Panc1 (cell line): ENCODE measurements at regions of chr4 and their contacts with region 1.

Region 1: DNA sequence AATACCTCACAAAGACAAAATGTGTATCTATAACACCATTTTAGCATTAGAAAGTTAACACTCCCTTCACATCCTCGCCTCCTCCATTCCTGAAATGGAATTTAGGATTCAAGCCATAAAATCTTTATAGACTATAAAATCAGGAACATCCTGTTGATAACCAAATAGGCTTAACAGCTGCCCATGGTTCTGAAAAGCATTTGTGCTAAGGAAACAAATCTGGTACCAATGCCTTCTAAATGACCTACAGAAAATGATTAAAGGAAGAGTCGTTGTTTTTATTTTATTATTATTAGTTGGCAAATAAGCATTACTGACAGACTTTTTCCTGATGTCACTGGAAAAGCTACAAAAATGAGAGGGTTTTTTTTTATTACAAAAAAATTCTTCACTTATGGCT is 79.8 kb downstream of the PAPSS1 start:
- DNase-seq: no peak
- ATAC-seq: no peak
- H3K4me3 ChIP-seq: no peak overlapping the region
- H3K27ac ChIP-seq: no peak overlapping the region
- H3K4me1 ChIP-seq: no peaks in the 10 kb centered on the region
- H3K27me3 ChIP-seq: no peaks in the 10 kb centered on the region
- CTCF ChIP-seq: no peak

Region 2: GRCh38 chr4:107719922-107720722 is 79.9 kb after region 1 on chr4 and contains the start of gene PAPSS1:
- CTCF ChIA-PET with region 1: no interaction called
- POLR2A ChIA-PET with region 1: interaction called, 13 read pairs
- in situ Hi-C with region 1: no loop called
- intact Hi-C with region 1: no loop called
- DNase-seq: peak; percentile 83
- ATAC-seq: peak; percentile 97
- H3K4me3 ChIP-seq: peak within 1 kb of the TSS; percentile 77 to 85
- H3K27ac ChIP-seq: peak within 1 kb of the TSS; percentile 81
- H3K4me1 ChIP-seq: peaks cover 8% of the 10 kb centered on the region
- H3K27me3 ChIP-seq: no peaks in the 10 kb centered on the region
- CTCF ChIP-seq: no peak
- total RNA-seq, gene PAPSS1: 28.1 TPM

Region 3: DNA sequence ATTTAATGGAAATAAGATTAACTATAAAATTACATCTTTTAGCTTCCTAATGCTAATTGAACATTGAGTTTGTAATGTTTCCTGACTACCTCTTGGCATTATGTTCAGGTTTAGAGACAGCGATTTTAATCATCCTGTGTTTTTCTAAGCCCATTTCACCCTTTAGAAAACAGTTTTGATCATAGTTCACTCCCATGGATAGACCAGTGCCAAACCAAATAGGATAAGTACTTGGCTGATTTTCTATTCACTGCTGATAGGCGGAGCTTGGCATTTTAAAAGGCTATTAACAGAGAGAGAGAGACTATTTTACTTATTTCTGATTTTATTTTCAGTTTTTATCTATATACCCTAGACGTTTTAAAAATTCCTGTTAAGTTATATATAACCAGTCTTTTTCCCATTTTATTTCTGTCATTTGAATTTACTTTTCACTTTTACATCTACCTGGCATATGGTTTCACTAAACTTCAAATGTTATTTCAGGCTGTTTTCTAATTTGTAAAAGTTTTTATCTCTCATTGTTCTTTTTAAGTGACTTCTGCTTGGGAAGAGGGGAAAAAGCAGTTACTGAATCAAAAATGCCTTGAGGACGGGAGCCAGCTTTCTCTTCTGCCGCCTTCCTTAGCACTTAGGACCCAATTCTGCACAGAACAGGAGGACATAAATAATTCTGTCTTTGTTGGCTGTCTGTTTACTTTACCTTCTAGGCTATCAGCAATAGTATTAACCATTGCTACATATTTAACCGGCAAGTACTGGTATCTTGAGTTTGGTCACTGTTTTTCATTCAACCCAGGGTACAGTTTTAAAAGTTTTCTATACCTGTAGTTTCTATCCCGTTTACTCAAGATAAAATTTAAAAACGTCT is 231.0 kb after region 1 on chr4:
- CTCF ChIA-PET with region 1: no interaction called
- POLR2A ChIA-PET with region 1: no interaction called
- in situ Hi-C with region 1: no loop called
- intact Hi-C with region 1: no loop called
- DNase-seq: no peak
- ATAC-seq: no peak
- H3K4me3 ChIP-seq: no peak overlapping the region
- H3K27ac ChIP-seq: no peak overlapping the region
- H3K4me1 ChIP-seq: no peaks in the 10 kb centered on the region
- H3K27me3 ChIP-seq: no peaks in the 10 kb centered on the region
- CTCF ChIP-seq: no peak